Posterior cingulate gyrus (tissue), 11 donors: ENCODE measurements at regions of chr5 and their contacts with region 1.

Region 1: GRCh38 chr5:79474367-79475151 is 39.4 kb downstream of the HOMER1 start:
- DNase-seq: no peak

Region 2: GRCh38 chr5:79030663-79031484 is 443.7 kb before region 1 on chr5:
- intact Hi-C with region 1: loop called (anchors 5 kb)
- DNase-seq: no peak